Activated CD4-positive, alpha-beta memory T cell treated with anti-CD3 and anti-CD28 coated beads for 36 hours (primary cell): ENCODE measurements at regions of chr7 and their contacts with region 1.

Region 1: GRCh38 chr7:22726345-22727185 is 435 bp upstream of the IL6 start:
- DNase-seq: peak; percentile 70
- H3K4me3 Mint-ChIP-seq: peak overlapping the region; percentile 57
- H3K27ac Mint-ChIP-seq: no peak overlapping the region
- H3K4me1 Mint-ChIP-seq: peaks cover 26% of the 10 kb centered on the region
- H3K27me3 Mint-ChIP-seq: peaks cover 32% of the 10 kb centered on the region

Region 2: DNA sequence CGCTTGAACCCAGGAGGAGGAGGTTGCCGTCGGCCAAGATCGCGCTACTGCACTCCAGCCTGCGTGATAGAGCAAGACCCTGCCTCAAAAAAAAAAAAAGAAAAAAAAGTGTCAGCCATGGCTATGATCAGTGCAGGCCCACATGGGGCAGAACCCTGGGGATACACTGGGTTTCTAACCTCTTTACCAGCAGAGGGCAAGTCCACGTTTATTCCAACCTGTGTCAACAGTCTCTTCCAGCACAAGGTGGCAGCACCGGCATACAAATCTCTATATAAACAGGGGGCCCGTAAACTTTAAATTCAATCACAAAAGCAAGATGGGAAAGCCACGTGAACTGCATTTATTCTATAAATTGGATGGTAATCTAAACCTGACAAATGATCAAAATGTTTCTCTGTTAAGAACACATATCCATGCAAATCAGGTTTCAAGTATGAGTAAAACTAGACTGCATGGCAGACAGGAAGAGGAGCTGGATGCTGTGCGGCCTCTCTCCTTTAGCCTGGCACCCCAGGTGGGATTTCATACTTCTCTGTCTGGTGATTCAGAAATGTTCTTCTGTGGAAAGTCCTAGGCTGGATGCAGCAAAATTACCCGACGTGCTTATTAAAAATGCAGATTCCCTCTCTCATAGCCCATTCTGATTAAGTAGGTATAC is 166.6 kb before region 1 on chr7:
- CTCF ChIA-PET with region 1: interaction called, 540 read pairs
- POLR2A ChIA-PET with region 1: interaction called, 3 read pairs
- intact Hi-C with region 1: loop called (anchors 1 kb)
- DNase-seq: peak; percentile 77
- H3K4me3 Mint-ChIP-seq: no peak overlapping the region
- H3K27ac Mint-ChIP-seq: no peak overlapping the region
- H3K4me1 Mint-ChIP-seq: peaks cover 39% of the 10 kb centered on the region
- H3K27me3 Mint-ChIP-seq: peaks cover 9% of the 10 kb centered on the region

Region 3: GRCh38 chr7:22660732-22661131 is 65.8 kb before region 1 on chr7:
- CTCF ChIA-PET with region 1: interaction called, 4 read pairs
- POLR2A ChIA-PET with region 1: no interaction called
- intact Hi-C with region 1: loop called (anchors 1 kb)
- DNase-seq: no peak
- H3K4me3 Mint-ChIP-seq: no peak overlapping the region
- H3K27ac Mint-ChIP-seq: no peak overlapping the region
- H3K4me1 Mint-ChIP-seq: peaks cover 26% of the 10 kb centered on the region
- H3K27me3 Mint-ChIP-seq: peaks cover 15% of the 10 kb centered on the region

Region 4: DNA sequence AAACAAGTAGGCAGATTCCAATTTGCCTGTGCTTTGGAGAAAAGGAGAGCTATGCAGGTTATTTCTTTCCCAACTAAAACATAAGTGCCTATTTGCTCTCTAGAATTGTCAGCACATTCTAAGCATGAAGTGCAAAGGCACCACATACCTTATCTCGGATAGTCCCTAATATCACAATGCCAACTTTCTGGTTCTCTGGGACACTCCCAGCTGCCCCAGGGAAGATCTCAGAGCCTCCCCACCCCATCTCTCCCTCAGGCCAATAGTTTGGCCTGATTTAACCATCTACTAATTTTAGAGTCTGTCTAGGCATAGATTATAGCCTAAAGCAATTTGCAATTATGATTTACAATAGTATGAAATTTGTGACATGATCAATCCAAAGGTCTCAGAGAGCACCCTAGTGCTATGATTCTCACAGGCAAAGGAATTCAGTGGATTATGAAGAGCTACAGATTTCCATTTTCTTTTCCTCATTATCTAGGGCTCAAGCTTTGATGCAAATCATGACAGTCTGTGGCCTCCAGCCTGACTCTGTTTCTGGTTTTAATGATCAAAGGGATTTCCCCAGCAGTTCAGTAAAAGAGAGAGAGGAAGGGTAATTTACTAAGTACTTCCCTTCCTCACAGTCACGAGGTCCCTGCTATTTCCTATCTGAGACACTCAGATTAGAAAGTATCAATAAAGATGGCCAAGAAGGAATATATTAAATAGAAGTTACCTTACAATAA is 28.5 kb before region 1 on chr7:
- CTCF ChIA-PET with region 1: interaction called, 13 read pairs
- POLR2A ChIA-PET with region 1: interaction called, 3 read pairs
- intact Hi-C with region 1: loop called (anchors 2 kb)
- DNase-seq: peak; percentile 36
- H3K4me3 Mint-ChIP-seq: peak overlapping the region; percentile 13
- H3K27ac Mint-ChIP-seq: peak overlapping the region; percentile 85
- H3K4me1 Mint-ChIP-seq: peaks cover 66% of the 10 kb centered on the region
- H3K27me3 Mint-ChIP-seq: peaks cover 2% of the 10 kb centered on the region

Region 5: DNA sequence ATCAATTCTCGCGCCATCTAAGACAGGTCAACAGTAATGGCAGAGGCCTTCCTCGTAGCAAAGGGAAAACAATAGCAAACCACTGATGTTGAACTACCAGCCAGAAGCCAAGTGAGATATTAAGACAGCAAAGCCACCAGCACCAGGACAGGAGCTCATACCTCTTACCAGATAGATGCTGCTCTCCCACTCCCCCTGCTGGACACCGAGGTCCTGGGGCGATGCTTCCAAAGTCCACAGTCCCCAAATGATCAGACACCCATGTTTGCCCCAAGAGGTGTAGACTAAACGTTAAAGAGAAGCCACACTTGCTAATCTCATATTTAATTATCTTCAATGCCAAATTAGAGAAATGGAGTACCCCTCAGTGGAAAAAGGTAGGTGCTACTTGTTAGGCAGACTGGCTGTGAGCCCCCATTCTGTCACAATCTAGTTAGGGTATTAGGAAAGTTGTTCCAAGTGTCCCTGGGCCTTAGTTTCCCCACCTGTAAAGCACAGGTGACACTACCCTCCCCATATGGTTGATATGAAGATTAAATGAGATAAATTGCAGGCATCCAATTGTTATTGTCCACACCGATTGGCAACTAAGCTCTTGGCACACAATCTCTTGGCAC is 56.2 kb after region 1 on chr7:
- CTCF ChIA-PET with region 1: interaction called, 17 read pairs
- POLR2A ChIA-PET with region 1: no interaction called
- intact Hi-C with region 1: no loop called
- DNase-seq: peak; percentile 82
- H3K4me3 Mint-ChIP-seq: no peak overlapping the region
- H3K27ac Mint-ChIP-seq: no peak overlapping the region
- H3K4me1 Mint-ChIP-seq: no peaks in the 10 kb centered on the region
- H3K27me3 Mint-ChIP-seq: no peaks in the 10 kb centered on the region

Region 6: GRCh38 chr7:22934473-22935065 is 208.0 kb after region 1 on chr7:
- CTCF ChIA-PET with region 1: no interaction called
- POLR2A ChIA-PET with region 1: no interaction called
- intact Hi-C with region 1: no loop called
- DNase-seq: no peak
- H3K4me3 Mint-ChIP-seq: no peak overlapping the region
- H3K27ac Mint-ChIP-seq: no peak overlapping the region
- H3K4me1 Mint-ChIP-seq: no peaks in the 10 kb centered on the region
- H3K27me3 Mint-ChIP-seq: no peaks in the 10 kb centered on the region